ENCODE measurements at regions of chr17 and their contacts with region 1.

Region 1: GRCh38 chr17:66715745-66716156 is 119.2 kb upstream of the CACNG5 start:
- DNase-seq: peak; percentile 74
- H3K4me3 Mint-ChIP-seq: no peak overlapping the region
- H3K27ac Mint-ChIP-seq: no peak overlapping the region
- H3K4me1 Mint-ChIP-seq: peaks cover 5% of the 10 kb centered on the region
- H3K27me3 Mint-ChIP-seq: no peaks in the 10 kb centered on the region
- CTCF ChIP-seq: peak; percentile 57

Region 2: GRCh38 chr17:66727639-66728570 is 12.2 kb after region 1 on chr17:
- CTCF ChIA-PET with region 1: interaction called, 17 read pairs
- POLR2A ChIA-PET with region 1: no interaction called
- intact Hi-C with region 1: no loop called
- DNase-seq: peak; percentile 54
- H3K4me3 Mint-ChIP-seq: no peak overlapping the region
- H3K27ac Mint-ChIP-seq: no peak overlapping the region
- H3K4me1 Mint-ChIP-seq: no peaks in the 10 kb centered on the region
- H3K27me3 Mint-ChIP-seq: no peaks in the 10 kb centered on the region
- CTCF ChIP-seq: peak; percentile 60

Region 3: GRCh38 chr17:66900126-66901010 is 184.6 kb after region 1 on chr17:
- CTCF ChIA-PET with region 1: interaction called, 29 read pairs
- POLR2A ChIA-PET with region 1: interaction called, 3 read pairs
- intact Hi-C with region 1: loop called (anchors 1 kb)
- DNase-seq: peak; percentile 38
- H3K4me3 Mint-ChIP-seq: no peak overlapping the region
- H3K27ac Mint-ChIP-seq: no peak overlapping the region
- H3K4me1 Mint-ChIP-seq: peaks cover 8% of the 10 kb centered on the region
- H3K27me3 Mint-ChIP-seq: peaks cover 16% of the 10 kb centered on the region
- CTCF ChIP-seq: no peak

Region 4: DNA sequence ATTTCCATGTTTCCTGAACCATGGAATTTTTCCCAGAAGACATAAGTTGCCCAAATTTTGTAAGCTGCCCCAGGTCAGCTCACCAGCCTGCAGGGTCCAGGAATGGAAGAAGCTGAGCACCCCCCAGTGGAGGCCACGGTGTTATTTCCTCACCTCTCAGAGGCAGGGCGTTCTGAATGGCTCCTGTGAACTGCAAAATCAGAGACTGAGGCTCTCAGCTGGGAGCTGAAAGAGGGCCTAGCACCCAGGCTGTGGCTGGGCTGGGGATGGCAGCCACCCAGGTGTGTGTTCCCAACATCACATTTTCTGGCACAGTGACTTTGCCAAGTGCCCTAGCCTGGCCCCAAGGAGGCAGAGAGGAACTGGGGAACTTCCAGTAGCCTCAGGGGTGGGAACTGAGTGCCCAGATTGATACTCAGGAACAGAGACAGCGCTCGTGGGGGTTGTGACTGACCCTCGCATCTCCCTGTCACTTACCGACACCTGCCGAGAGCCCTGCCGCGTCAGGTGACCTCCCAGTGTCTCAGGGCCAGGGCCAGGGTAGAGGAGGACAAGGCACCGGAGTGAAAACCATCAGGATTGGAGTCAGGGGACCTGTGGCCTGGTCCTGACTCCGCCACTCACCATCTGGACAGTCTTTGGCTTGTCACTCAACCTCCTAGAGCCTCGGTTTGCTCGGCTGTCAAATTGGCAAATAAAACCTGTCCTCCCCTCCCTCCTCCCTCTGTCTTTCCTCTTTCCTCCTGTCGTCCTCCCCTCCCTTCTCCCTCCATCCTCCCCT is 260.0 kb after region 1 on chr17:
- CTCF ChIA-PET with region 1: interaction called, 3 read pairs
- POLR2A ChIA-PET with region 1: no interaction called
- intact Hi-C with region 1: loop called (anchors 1 kb)
- DNase-seq: peak; percentile 60
- H3K4me3 Mint-ChIP-seq: no peak overlapping the region
- H3K27ac Mint-ChIP-seq: no peak overlapping the region
- H3K4me1 Mint-ChIP-seq: peaks cover 11% of the 10 kb centered on the region
- H3K27me3 Mint-ChIP-seq: peaks cover 39% of the 10 kb centered on the region
- CTCF ChIP-seq: peak; percentile 45

Region 5: GRCh38 chr17:67366193-67367157 is 650.7 kb after region 1 on chr17 and contains the start of gene PSMD12:
- CTCF ChIA-PET with region 1: no interaction called
- POLR2A ChIA-PET with region 1: no interaction called
- intact Hi-C with region 1: loop called (anchors 10 kb)
- DNase-seq: peak; percentile 90
- H3K4me3 Mint-ChIP-seq: peak within 1 kb of the TSS; percentile 90
- H3K27ac Mint-ChIP-seq: peak within 1 kb of the TSS; percentile 74
- H3K4me1 Mint-ChIP-seq: peaks cover 18% of the 10 kb centered on the region
- H3K27me3 Mint-ChIP-seq: no peaks in the 10 kb centered on the region
- CTCF ChIP-seq: no peak
- total RNA-seq, gene PSMD12: 93.1 and 107 TPM in 2 replicates

Measured in MCF 10A (cell line).